Naive thymus-derived CD4-positive, alpha-beta T cell (primary cell): ENCODE measurements at regions of chr6 and their contacts with region 1.

Region 1: GRCh38 chr6:3848925-3849605 is at the start of gene FAM50B:
- DNase-seq: peak; percentile 84 to 92 (median 90)
- ATAC-seq: peak; percentile 99
- H3K4me3 ChIP-seq: peak within 1 kb of the TSS; percentile 72
- H3K4me3 Mint-ChIP-seq: peak within 1 kb of the TSS; percentile 68 to 89 (median 80)
- H3K27ac ChIP-seq: peak within 1 kb of the TSS; percentile 59
- H3K27ac Mint-ChIP-seq: peak within 1 kb of the TSS; percentile 27 to 95 (median 78)
- H3K4me1 ChIP-seq: peaks cover 0 to 6% of the 10 kb centered on the region in 2 donors
- H3K4me1 Mint-ChIP-seq: peaks cover 0 to 26% (median 16%) of the 10 kb centered on the region in 7 donors
- H3K27me3 ChIP-seq: no peaks in the 10 kb centered on the region
- H3K27me3 Mint-ChIP-seq: peaks cover 0 to 3% (median 0%) of the 10 kb centered on the region in 5 donors
- total RNA-seq, gene FAM50B: 3.4 to 14.1 (median 12.0) TPM

Region 2: GRCh38 chr6:2524090-2524489 is 1325.0 kb before region 1 on chr6:
- CTCF ChIA-PET with region 1: no interaction called
- POLR2A ChIA-PET with region 1: no interaction called
- intact Hi-C with region 1: no loop called
- DNase-seq: no peak
- ATAC-seq: no peak
- H3K4me3 ChIP-seq: no peak overlapping the region
- H3K4me3 Mint-ChIP-seq: no peak overlapping the region
- H3K27ac ChIP-seq: no peak overlapping the region
- H3K27ac Mint-ChIP-seq: no peak overlapping the region
- H3K4me1 ChIP-seq: no peaks in the 10 kb centered on the region
- H3K4me1 Mint-ChIP-seq: peaks cover 0 to 13% (median 5%) of the 10 kb centered on the region in 7 donors
- H3K27me3 ChIP-seq: no peaks in the 10 kb centered on the region
- H3K27me3 Mint-ChIP-seq: peaks cover 31 to 51% (median 36%) of the 10 kb centered on the region in 5 donors

Region 3: DNA sequence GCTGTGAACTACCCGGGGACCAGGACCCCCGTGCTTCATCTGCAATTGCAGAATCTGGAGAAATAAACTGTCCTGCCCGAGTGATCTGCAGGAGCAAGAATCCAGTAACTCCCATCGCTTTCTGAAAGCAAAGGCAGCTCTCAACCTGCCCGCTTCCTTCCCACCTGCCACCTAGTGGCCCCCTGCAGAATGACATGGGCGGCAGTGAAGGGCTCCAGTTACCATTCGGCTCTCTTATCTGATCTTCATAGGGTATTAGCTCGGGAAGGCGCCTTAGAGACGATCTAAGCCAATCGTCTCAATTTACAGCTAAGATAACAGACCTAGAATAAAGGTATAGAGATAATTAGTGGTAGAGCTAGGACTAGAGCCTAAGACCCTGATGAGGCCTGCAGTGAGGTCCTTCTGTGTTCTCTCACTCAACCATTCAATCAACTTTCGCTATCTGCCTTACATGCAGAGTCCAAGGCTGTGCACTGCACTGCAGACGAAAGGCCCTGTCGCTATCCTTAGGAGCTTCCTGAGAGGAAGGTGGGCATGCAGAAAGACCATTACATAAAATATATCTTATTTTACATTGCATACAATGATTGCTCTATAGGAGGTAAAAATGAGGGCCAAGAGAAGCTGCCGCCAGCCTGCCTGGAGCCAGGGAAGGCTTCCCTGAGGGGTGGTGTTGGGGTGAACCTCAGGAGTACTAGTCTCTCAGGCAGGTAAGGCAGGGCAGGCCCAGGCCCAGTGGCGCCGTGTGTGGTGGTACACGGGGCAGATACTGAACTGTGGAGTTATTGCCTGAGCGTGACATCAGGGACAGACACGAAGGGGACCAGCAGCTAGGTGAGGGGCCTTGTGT is 597.4 kb before region 1 on chr6:
- CTCF ChIA-PET with region 1: no interaction called
- POLR2A ChIA-PET with region 1: no interaction called
- intact Hi-C with region 1: loop called in 1 of 2 experiments (anchors 2 kb)
- DNase-seq: peak; percentile 58 to 82 (median 76)
- ATAC-seq: peak; percentile 94
- H3K4me3 ChIP-seq: no peak overlapping the region
- H3K4me3 Mint-ChIP-seq: peak overlapping the region in 5 of 10 donors; percentile 11 to 60 (median 40)
- H3K27ac ChIP-seq: no peak overlapping the region
- H3K27ac Mint-ChIP-seq: peak overlapping the region in 1 of 9 donors; percentile 54
- H3K4me1 ChIP-seq: peaks cover 7 to 8% of the 10 kb centered on the region in 2 donors
- H3K4me1 Mint-ChIP-seq: peaks cover 6 to 12% (median 7%) of the 10 kb centered on the region in 7 donors
- H3K27me3 ChIP-seq: no peaks in the 10 kb centered on the region
- H3K27me3 Mint-ChIP-seq: peaks cover 17 to 51% (median 27%) of the 10 kb centered on the region in 5 donors

Region 4: DNA sequence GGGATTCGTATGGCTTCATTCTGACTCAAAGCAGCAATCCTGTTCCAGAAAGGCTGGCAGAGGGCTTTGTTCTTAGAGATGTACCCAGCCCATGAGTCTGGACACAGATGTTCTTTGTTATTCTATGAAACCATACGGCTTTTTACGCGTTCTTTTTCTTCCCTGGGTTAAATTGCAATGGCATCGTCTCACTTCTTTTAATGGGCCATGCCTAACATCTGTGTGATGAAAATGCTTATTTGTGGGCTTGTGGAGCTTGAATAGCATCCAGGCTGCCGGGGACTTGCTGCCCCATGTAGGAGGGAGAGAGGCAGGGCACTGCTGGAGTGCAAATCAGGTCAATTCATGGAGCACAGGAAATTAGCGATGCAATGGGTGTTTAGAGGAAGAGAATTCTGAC is 19.5 kb after region 1 on chr6:
- CTCF ChIA-PET with region 1: interaction called, 4 read pairs
- POLR2A ChIA-PET with region 1: no interaction called
- intact Hi-C with region 1: loop called in 1 of 2 experiments (anchors 1 kb)
- DNase-seq: no peak
- ATAC-seq: no peak
- H3K4me3 ChIP-seq: no peak overlapping the region
- H3K4me3 Mint-ChIP-seq: no peak overlapping the region
- H3K27ac ChIP-seq: no peak overlapping the region
- H3K27ac Mint-ChIP-seq: peak overlapping the region in 1 of 9 donors; percentile 65
- H3K4me1 ChIP-seq: peaks cover 0 to 15% of the 10 kb centered on the region in 2 donors
- H3K4me1 Mint-ChIP-seq: peaks cover 0 to 22% (median 14%) of the 10 kb centered on the region in 7 donors
- H3K27me3 ChIP-seq: no peaks in the 10 kb centered on the region
- H3K27me3 Mint-ChIP-seq: peaks cover 7 to 19% (median 15%) of the 10 kb centered on the region in 5 donors

Region 5: DNA sequence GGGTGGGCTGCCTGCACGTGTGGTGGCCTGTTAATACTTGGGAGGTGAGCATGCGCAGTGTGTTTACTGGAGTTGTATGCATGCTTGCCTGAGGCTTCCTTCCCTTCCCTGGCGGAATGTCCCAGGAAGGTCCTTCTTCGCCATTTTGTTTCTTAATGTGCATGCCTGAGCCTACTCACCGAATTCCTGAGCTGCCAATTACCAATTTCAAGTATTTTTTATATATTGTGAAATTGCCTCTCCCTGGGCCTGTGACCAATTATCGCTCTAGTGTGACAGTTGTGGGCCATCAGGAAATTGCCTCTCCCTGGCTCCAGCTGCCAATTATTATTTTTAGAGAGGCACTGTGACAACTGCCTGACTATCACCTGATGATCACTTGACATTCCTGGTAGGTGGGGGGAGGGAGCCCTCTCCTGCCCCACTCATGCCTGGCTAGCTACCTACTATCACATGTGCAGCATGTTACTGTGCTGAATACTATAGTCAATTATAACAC is 70.1 kb after region 1 on chr6:
- CTCF ChIA-PET with region 1: interaction called, 4 read pairs
- POLR2A ChIA-PET with region 1: no interaction called
- intact Hi-C with region 1: loop called (anchors 1 to 5 kb)
- DNase-seq: no peak
- ATAC-seq: no peak
- H3K4me3 ChIP-seq: no peak overlapping the region
- H3K4me3 Mint-ChIP-seq: no peak overlapping the region
- H3K27ac ChIP-seq: no peak overlapping the region
- H3K27ac Mint-ChIP-seq: no peak overlapping the region
- H3K4me1 ChIP-seq: peaks cover 16 to 22% of the 10 kb centered on the region in 2 donors
- H3K4me1 Mint-ChIP-seq: peaks cover 16 to 30% (median 25%) of the 10 kb centered on the region in 7 donors
- H3K27me3 ChIP-seq: no peaks in the 10 kb centered on the region
- H3K27me3 Mint-ChIP-seq: peaks cover 0 to 60% (median 2%) of the 10 kb centered on the region in 5 donors

Region 6: GRCh38 chr6:3977875-3978711 is 129.0 kb after region 1 on chr6:
- CTCF ChIA-PET with region 1: interaction called, 13 read pairs
- POLR2A ChIA-PET with region 1: no interaction called
- intact Hi-C with region 1: loop called (anchors 1 kb)
- DNase-seq: peak in 8 of 9 donors; percentile 23 to 69 (median 52)
- ATAC-seq: peak; percentile 98
- H3K4me3 ChIP-seq: no peak overlapping the region
- H3K4me3 Mint-ChIP-seq: no peak overlapping the region
- H3K27ac ChIP-seq: no peak overlapping the region
- H3K27ac Mint-ChIP-seq: peak overlapping the region in 3 of 9 donors; percentile 5 to 66 (median 5)
- H3K4me1 ChIP-seq: no peaks in the 10 kb centered on the region
- H3K4me1 Mint-ChIP-seq: peaks cover 6 to 13% (median 10%) of the 10 kb centered on the region in 7 donors
- H3K27me3 ChIP-seq: no peaks in the 10 kb centered on the region
- H3K27me3 Mint-ChIP-seq: peaks cover 0 to 30% (median 0%) of the 10 kb centered on the region in 5 donors

Region 7: GRCh38 chr6:4155848-4156466 is 306.9 kb after region 1 on chr6:
- CTCF ChIA-PET with region 1: no interaction called
- POLR2A ChIA-PET with region 1: no interaction called
- intact Hi-C with region 1: loop called in 1 of 2 experiments (anchors 5 kb)
- DNase-seq: peak; percentile 33 to 81 (median 71)
- ATAC-seq: peak; percentile 95
- H3K4me3 ChIP-seq: no peak overlapping the region
- H3K4me3 Mint-ChIP-seq: peak overlapping the region in 2 of 10 donors; percentile 20 to 29
- H3K27ac ChIP-seq: no peak overlapping the region
- H3K27ac Mint-ChIP-seq: no peak overlapping the region
- H3K4me1 ChIP-seq: no peaks in the 10 kb centered on the region
- H3K4me1 Mint-ChIP-seq: peaks cover 0 to 24% (median 5%) of the 10 kb centered on the region in 7 donors
- H3K27me3 ChIP-seq: no peaks in the 10 kb centered on the region
- H3K27me3 Mint-ChIP-seq: peaks cover 0 to 12% (median 6%) of the 10 kb centered on the region in 5 donors